ENCODE measurements at regions of chr11 and their contacts with region 1.

Region 1: GRCh38 chr11:30143098-30143705 is 87.6 kb upstream of the FSHB start:
- DNase-seq: no peak
- H3K4me3 ChIP-seq: no peak overlapping the region
- CTCF ChIP-seq: peak; percentile 55

Region 2: GRCh38 chr11:29432719-29433325 is 710.4 kb before region 1 on chr11:
- CTCF ChIA-PET with region 1: interaction called, 41 read pairs
- POLR2A ChIA-PET with region 1: no interaction called
- DNase-seq: no peak
- H3K4me3 ChIP-seq: no peak overlapping the region
- CTCF ChIP-seq: peak; percentile 23

Region 3: GRCh38 chr11:30059172-30059815 is 83.9 kb before region 1 on chr11:
- CTCF ChIA-PET with region 1: no interaction called
- POLR2A ChIA-PET with region 1: no interaction called
- DNase-seq: no peak
- H3K4me3 ChIP-seq: no peak overlapping the region
- CTCF ChIP-seq: no peak

Region 4: GRCh38 chr11:30107899-30108298 is 35.3 kb before region 1 on chr11:
- CTCF ChIA-PET with region 1: interaction called, 20 read pairs
- POLR2A ChIA-PET with region 1: no interaction called
- DNase-seq: peak; percentile 37
- H3K4me3 ChIP-seq: no peak overlapping the region
- CTCF ChIP-seq: no peak

Region 5: DNA sequence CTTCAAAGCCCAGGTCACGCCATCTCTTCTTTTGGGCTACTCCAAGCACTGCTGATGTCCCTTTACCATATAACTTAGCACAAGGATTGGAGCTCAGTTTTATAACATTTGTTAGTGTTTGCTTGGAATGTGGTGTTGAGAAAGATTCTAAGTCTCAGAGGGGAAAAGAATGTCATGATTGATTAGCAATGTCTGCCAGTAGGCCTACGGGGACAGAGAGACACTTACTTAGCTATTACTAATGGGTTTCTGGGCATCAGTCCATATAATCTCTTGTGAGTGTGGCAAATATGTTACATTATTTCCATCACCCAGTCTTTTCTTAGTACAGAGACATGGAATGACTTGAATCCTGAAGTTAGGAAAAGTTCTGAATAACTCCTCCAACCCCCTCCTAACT is 12.2 kb after region 1 on chr11:
- CTCF ChIA-PET with region 1: interaction called, 29 read pairs
- POLR2A ChIA-PET with region 1: no interaction called
- DNase-seq: no peak
- H3K4me3 ChIP-seq: no peak overlapping the region
- CTCF ChIP-seq: no peak

Region 6: DNA sequence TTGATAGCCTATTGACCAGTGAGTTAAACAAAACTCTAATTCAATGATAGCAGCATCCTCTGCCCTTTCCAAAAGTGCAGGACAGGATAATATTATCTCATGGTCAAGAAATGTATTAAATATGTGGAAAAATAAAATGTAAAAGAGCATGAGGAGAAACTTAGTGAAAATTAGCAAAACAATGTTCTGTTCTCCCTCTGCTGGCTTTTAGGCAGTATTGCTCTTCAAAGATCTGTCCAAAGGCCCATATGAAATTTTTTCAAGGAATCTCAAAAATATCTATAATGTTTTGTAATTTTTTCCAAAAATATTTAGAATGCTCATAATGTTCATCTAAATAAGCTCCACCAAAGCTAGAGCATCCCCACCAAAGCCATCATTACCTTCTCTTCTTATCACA is 171.4 kb after region 1 on chr11:
- CTCF ChIA-PET with region 1: interaction called, 16 read pairs
- POLR2A ChIA-PET with region 1: no interaction called
- DNase-seq: no peak
- H3K4me3 ChIP-seq: no peak overlapping the region
- CTCF ChIP-seq: peak; percentile 34

Measured in AG04449 (cell line).